PC-9 (cell line): ENCODE measurements at regions of chr11 and their contacts with region 1.

Region 1: DNA sequence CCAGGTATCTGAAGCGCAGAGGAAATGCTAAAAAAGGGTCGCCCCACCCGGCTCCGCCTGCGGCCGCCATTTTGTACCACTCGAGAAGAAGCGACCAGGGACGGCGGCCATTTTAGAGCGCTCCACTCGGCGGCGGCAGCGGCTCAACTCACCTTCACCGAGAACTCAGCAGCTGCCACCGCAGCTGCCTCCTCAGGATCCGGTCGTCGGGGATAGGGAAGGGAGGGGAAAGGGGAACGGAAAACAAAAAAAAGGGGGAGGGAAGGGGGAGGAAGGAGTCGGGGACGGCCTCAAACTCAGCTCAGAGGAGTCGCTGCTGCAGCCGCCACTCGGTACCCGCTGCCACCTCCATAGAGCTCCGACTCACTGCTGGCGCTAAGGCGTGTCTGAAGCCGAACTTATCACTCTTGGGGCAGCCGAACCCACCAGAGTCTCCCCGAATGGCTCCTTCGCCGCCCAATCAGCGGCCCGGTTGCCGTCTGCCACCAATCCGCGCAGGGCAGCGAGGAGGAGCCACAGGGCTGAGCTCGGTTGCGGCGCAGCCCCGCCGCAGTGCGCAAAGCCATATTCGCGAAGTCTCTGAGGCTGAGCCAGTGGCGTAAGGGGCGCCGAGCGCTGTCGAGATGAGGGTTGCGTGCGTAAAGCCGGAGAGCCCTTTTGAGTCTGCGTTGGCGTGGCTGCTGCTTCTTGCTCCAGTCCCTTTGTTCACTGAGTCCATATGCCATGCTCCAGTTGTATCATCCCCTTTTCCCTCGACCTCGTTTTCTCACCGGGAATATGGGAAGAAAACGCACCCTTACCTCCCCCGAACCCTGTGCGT is at the start of gene EIF4G2:
- DNase-seq: peak; percentile 91 to 95
- H3K4me3 ChIP-seq: peak within 1 kb of the TSS; percentile 93
- H3K27ac ChIP-seq: peak within 1 kb of the TSS; percentile 96
- H3K4me1 ChIP-seq: peaks cover 13% of the 10 kb centered on the region
- H3K27me3 ChIP-seq: no peaks in the 10 kb centered on the region
- CTCF ChIP-seq: no peak
- total RNA-seq, gene EIF4G2: 353 and 439 TPM in 2 replicates

Region 2: GRCh38 chr11:10844356-10844755 is 35.6 kb after region 1 on chr11:
- CTCF ChIA-PET with region 1: no interaction called
- POLR2A ChIA-PET with region 1: interaction called, 5 read pairs
- intact Hi-C with region 1: loop called (anchors 5 kb)
- DNase-seq: no peak
- H3K4me3 ChIP-seq: no peak overlapping the region
- H3K27ac ChIP-seq: no peak overlapping the region
- H3K4me1 ChIP-seq: peaks cover 21% of the 10 kb centered on the region
- H3K27me3 ChIP-seq: no peaks in the 10 kb centered on the region
- CTCF ChIP-seq: no peak

Region 3: DNA sequence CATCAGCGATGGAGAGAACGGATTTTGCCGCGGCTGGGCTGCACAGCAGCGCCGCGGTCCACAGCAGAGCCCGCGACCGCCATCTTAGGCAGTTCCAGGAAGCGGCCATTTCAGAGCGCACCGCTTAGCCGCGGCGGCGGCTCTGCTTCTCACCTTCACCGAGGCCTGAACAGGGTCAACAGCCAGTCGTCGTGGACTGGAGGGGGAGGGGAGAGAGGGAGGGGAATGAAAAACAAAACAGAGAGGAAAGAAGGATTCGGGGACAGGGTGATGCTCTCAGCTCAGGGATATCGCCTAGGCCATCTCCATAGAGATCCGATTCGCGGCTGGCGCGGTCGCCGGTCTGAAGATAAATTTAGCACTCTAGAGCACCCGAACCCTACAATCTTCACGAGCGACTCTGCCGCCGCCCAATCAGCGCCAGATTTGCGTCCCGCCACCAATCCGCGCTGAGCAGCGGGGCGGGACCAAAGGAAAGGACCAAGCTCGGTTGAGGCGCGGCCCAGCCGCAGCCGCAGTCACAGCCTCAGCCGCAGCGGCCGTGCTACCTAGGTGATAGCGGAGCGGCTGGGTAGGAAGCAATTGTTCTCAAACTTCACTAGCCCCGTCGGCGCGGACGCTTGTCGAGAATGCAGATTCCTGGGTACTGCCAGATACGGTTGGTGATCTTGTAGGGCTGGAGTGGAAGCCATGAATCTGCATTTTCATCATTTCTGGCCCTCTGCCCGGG is 49.1 kb after region 1 on chr11 and contains the start of gene ZBED5:
- CTCF ChIA-PET with region 1: interaction called, 3 read pairs
- POLR2A ChIA-PET with region 1: interaction called, 15 read pairs
- intact Hi-C with region 1: loop called (anchors 1 kb)
- DNase-seq: peak; percentile 88 to 91
- H3K4me3 ChIP-seq: peak within 1 kb of the TSS; percentile 96
- H3K27ac ChIP-seq: peak within 1 kb of the TSS; percentile 82
- H3K4me1 ChIP-seq: peaks cover 21% of the 10 kb centered on the region
- H3K27me3 ChIP-seq: no peaks in the 10 kb centered on the region
- CTCF ChIP-seq: no peak; the same call in 1 of the 2 replicates
- total RNA-seq, gene ZBED5: 14.7 and 21.5 TPM in 2 replicates

Region 4: GRCh38 chr11:10899121-10899830 is 90.5 kb after region 1 on chr11:
- CTCF ChIA-PET with region 1: interaction called, 5 read pairs
- POLR2A ChIA-PET with region 1: interaction called, 19 read pairs
- intact Hi-C with region 1: loop called (anchors 2 kb)
- DNase-seq: peak; percentile 44 to 57
- H3K4me3 ChIP-seq: peak overlapping the region; percentile 48
- H3K27ac ChIP-seq: peak overlapping the region; percentile 98
- H3K4me1 ChIP-seq: peaks cover 61% of the 10 kb centered on the region
- H3K27me3 ChIP-seq: no peaks in the 10 kb centered on the region
- CTCF ChIP-seq: no peak

Region 5: GRCh38 chr11:10906513-10906912 is 97.8 kb after region 1 on chr11:
- CTCF ChIA-PET with region 1: interaction called, 5 read pairs
- POLR2A ChIA-PET with region 1: interaction called, 14 read pairs
- intact Hi-C with region 1: no loop called
- DNase-seq: peak in 1 of 2 experiments; percentile 44
- H3K4me3 ChIP-seq: no peak overlapping the region
- H3K27ac ChIP-seq: no peak overlapping the region
- H3K4me1 ChIP-seq: peaks cover 52% of the 10 kb centered on the region
- H3K27me3 ChIP-seq: no peaks in the 10 kb centered on the region
- CTCF ChIP-seq: no peak

Region 6: DNA sequence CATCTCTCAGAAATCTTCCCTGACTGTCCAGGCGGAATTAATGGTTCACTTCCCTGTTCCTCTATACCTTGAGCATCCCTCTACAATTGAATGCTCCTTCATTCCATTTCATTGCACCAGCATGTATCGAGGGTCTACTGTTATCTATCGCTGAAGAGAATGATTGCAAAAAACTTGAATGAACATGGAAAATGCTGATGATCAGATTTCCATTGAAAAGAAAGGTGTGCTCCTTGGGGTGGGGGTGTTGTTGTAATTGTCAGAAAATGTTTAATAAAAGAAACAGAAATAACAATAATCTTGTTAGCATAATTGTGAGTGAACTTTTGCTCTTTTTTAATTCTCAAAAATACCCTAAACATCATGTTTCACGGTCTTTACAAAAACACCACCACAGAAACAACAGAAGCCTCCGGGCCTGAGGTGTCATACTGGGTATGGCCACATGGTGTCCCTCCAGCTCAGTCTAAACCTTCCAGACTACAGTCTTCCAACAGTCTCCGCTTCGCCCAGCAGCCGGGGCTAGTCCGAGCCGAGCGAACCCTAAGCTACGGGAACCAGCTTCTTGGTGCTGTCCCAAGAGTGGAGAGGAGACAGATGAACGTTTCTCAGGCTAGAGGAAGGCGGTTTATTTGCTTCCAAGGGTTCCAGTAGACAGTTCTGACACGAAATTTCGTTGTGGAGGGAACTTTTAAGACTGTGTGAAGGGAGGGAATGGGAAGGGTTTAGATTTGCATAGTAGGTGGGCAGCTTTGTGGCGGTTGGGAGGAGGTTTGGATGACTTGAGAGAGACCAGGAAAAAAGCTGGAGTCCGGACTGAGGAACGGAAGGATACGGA is 124.9 kb after region 1 on chr11:
- CTCF ChIA-PET with region 1: interaction called, 8 read pairs
- POLR2A ChIA-PET with region 1: interaction called, 11 read pairs
- intact Hi-C with region 1: loop called (anchors 2 kb)
- DNase-seq: peak; percentile 77 to 79
- H3K4me3 ChIP-seq: peak overlapping the region; percentile 60
- H3K27ac ChIP-seq: no peak overlapping the region; the same call in 1 of the 2 replicates
- H3K4me1 ChIP-seq: peaks cover 9% of the 10 kb centered on the region; the same call in 1 of the 2 replicates
- H3K27me3 ChIP-seq: no peaks in the 10 kb centered on the region
- CTCF ChIP-seq: peak; percentile 85

Region 7: GRCh38 chr11:11841723-11842420 is 1033.1 kb after region 1 on chr11 and contains the start of gene USP47:
- CTCF ChIA-PET with region 1: no interaction called
- POLR2A ChIA-PET with region 1: interaction called, 18 read pairs
- intact Hi-C with region 1: no loop called
- DNase-seq: peak; percentile 57 to 81
- H3K4me3 ChIP-seq: peak within 1 kb of the TSS; percentile 93
- H3K27ac ChIP-seq: peak within 1 kb of the TSS; percentile 76
- H3K4me1 ChIP-seq: peaks cover 40% of the 10 kb centered on the region
- H3K27me3 ChIP-seq: no peaks in the 10 kb centered on the region
- CTCF ChIP-seq: peak; percentile 56
- total RNA-seq, gene USP47: 22.4 and 24.2 TPM in 2 replicates